ENCODE measurements at regions of chr13 and their contacts with region 1.

Region 1: DNA sequence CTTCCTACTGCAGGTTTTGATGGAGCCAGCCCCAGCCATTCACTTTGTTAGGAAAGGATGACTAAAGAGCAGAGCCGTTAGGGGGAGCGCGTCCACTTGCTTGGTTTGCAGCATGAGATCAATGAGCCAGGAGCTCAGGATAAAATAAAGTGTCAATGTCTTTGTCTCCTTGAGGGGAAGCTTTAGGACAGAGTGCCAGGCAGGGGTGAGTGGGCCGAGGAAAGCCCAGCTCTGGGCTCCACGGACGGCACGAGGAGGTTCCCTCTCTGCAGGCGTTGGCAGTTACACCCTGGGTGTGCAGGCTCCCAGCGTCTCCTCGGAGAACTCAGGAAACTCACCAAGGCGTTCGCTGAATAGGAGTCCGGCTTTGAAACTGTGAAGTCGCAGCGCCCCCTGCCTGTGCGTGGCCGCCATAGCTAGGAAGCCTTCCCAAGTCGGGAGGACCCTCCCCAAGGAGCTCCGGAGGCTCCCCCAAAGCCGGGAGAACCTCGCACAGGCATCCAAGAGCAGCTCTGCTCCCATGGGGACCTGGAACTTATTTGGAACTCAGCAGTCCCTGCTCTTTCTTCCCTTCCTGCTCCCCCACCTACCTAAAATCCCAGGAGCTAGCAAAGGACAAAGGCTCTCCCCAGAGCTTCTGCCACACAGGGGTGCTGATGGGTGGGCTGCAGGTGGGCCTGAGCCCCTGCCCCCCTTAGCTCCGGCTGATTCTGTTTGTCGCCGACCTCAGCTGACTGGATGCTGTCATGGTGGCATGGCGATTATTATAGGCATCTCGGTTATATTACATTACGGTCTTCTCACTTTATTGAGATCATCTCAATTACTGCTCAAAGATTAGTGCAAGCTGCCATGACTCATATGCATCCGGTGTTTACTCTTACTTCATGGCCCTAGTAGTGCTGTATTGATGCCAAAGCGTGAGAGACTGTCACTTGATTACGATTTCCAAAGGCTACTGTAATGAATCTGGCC is 34.4 kb downstream of the GSX1 start:
- DNase-seq: peak; percentile 88
- H3K4me3 ChIP-seq: peak overlapping the region in 1 of 3 experiments; percentile 30
- H3K27ac ChIP-seq: no peak overlapping the region
- H3K4me1 ChIP-seq: no peaks in the 10 kb centered on the region
- H3K27me3 ChIP-seq: peaks cover 28 to 44% of the 10 kb centered on the region in 2 experiments
- CTCF ChIP-seq: peak; percentile 85 to 93
- POLR2A ChIP-seq: no peak

Region 2: DNA sequence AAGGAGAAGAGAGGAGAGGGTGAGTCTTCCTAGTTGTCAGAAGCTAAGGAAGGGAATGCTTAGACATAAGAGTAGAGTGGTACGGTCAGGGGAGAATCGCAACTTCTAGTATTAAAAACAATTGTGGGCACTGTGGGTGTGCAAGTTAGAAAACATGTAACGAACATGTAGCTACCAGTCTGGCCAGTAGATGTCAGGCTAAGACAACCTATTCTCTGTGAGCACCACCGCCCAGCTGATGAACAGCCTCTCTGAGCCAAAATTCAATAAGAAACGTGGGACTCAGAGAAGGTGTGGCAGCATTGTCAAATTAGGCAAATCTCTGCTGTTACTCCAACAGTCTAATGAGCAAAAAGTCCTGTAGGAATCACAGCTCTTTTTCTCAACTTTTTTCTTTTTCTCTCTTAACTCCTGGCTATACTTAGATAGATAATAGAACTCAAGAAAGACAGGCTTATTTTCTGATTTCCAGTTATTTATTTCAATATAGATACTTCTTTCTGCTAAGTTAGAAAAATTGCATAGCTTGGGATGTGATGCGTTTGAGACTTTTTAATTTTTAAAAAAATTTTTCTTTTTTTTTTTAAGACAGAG is 841.3 kb before region 1 on chr13:
- CTCF ChIA-PET with region 1: interaction called, 13 read pairs
- POLR2A ChIA-PET with region 1: no interaction called
- dilution Hi-C with region 1: no loop called
- intact Hi-C with region 1: loop called (anchors 1 kb)
- DNase-seq: peak; percentile 77
- H3K4me3 ChIP-seq: no peak overlapping the region
- H3K27ac ChIP-seq: no peak overlapping the region
- H3K4me1 ChIP-seq: peaks cover 4% of the 10 kb centered on the region
- H3K27me3 ChIP-seq: peaks cover 2 to 4% of the 10 kb centered on the region in 2 experiments
- CTCF ChIP-seq: peak; percentile 63 to 74
- POLR2A ChIP-seq: no peak

Region 3: GRCh38 chr13:27424246-27425157 is 402.2 kb before region 1 on chr13 and contains the start of gene GTF3A:
- CTCF ChIA-PET with region 1: interaction called, 11 read pairs
- POLR2A ChIA-PET with region 1: no interaction called
- dilution Hi-C with region 1: no loop called
- intact Hi-C with region 1: no loop called
- DNase-seq: peak; percentile 91
- H3K4me3 ChIP-seq: peak within 1 kb of the TSS; percentile 23 to 66 (median 57)
- H3K27ac ChIP-seq: peak within 1 kb of the TSS; percentile 69
- H3K4me1 ChIP-seq: peaks cover 25% of the 10 kb centered on the region
- H3K27me3 ChIP-seq: no peaks in the 10 kb centered on the region
- CTCF ChIP-seq: no peak
- POLR2A ChIP-seq: peak; percentile 89
- total RNA-seq, gene GTF3A: 71.2 and 73.3 TPM in 2 replicates

Region 4: DNA sequence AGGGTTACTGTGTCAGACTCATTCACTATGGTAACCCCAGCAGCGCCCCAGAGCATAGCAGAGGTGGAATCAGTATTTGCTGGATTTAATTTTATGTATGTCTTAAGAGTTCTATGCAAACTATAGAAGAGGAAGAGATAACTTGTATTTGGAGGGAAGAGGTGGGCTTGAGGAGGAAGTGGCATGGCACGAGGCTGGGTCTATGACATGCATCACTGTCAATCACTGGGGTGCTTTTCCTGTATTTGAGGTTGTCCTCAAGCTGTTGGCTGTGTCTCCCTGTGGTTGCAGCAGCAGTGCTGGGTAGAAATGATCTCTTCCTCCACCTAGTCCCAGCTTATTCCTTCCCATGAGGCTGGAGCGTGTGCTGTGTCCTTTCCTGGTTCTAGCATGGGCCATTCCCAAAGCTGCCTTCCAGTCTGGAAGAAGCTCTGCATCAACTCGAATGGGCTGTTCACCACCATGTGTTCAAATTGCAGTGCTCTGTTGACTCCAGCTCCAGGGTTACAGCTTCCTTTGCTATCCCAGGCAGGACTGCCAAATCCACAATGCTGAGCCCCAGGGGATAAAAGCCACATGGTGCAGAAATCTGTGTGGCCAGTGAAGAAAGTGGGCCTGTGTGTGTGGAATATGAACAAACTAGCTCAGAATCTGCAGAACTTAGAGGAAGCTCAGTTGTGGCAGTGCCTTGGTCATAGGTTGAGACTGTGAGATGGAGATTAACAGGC is 303.2 kb before region 1 on chr13:
- CTCF ChIA-PET with region 1: interaction called, 484 read pairs
- POLR2A ChIA-PET with region 1: no interaction called
- dilution Hi-C with region 1: loop called (anchors 25 kb)
- intact Hi-C with region 1: no loop called
- DNase-seq: no peak
- H3K4me3 ChIP-seq: no peak overlapping the region
- H3K27ac ChIP-seq: no peak overlapping the region
- H3K4me1 ChIP-seq: peaks cover 7% of the 10 kb centered on the region
- H3K27me3 ChIP-seq: peaks cover 4 to 9% of the 10 kb centered on the region in 2 experiments
- CTCF ChIP-seq: no peak
- POLR2A ChIP-seq: no peak

Region 5: DNA sequence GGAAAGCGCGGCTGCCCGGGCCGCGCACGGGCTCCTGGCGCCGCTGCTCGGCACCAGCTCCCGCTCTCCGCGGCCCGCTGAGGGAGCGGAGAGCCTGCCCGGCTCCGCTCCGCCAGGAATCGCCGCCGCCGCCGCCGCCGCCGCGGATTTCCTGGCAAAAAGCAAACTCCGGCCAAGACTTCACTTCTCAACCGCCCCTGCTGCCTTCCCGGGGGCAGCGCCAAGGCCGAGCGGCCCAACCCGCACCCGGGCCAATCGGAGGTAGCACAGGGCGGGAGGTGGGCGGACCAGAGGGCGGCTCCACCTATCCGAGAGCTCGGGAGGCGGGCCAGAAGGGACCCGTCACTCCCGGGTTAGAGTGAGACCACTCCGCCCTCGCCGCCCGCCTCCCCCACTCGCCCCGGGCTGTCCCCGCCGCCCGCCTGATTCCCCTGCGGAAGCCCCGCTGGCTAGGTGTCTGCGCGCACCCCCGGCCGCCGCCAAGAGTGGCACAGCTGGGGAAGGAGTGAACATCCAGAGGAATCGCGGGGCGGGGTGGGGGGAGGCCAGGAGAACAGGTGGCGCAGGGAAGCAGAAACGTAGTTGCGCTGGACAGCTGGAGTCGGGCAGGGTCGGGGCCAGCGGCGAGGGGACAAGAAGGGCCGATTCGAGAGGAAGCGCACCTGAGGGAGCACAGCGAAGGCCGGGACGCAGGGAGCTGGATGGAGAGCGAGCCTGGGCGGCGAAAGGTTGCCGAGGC is 206.1 kb before region 1 on chr13 and contains the start of gene LNX2:
- CTCF ChIA-PET with region 1: interaction called, 21 read pairs
- POLR2A ChIA-PET with region 1: no interaction called
- dilution Hi-C with region 1: no loop called
- intact Hi-C with region 1: loop called (anchors 5 kb)
- DNase-seq: peak; percentile 97
- H3K4me3 ChIP-seq: peak within 1 kb of the TSS; percentile 65 to 90 (median 90)
- H3K27ac ChIP-seq: peak within 1 kb of the TSS; percentile 75
- H3K4me1 ChIP-seq: peaks cover 17% of the 10 kb centered on the region
- H3K27me3 ChIP-seq: no peaks in the 10 kb centered on the region
- CTCF ChIP-seq: no peak
- POLR2A ChIP-seq: peak; percentile 22
- total RNA-seq, gene LNX2: 9.1 and 9.9 TPM in 2 replicates

Region 6: DNA sequence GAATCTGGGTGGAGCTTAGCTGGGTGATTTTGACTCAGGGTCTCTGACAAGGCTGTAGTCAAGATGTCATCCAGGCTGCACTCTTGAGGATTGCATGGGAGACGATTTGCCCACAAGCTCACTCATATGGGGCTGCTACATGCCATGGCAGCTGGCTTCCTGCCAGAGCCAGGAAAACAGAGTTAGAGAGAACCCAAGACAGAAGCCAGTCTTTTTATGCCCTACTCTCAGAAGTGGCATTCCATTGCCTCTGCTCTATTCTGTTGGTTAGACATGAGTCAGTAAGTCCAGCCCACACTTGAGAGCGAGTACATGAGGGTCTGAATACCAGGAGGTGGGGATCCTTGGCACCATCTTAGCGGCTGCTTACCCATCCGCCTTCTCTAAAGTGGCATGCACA is 195.5 kb before region 1 on chr13:
- CTCF ChIA-PET with region 1: no interaction called
- POLR2A ChIA-PET with region 1: no interaction called
- dilution Hi-C with region 1: no loop called
- intact Hi-C with region 1: no loop called
- DNase-seq: no peak
- H3K4me3 ChIP-seq: no peak overlapping the region
- H3K27ac ChIP-seq: no peak overlapping the region
- H3K4me1 ChIP-seq: no peaks in the 10 kb centered on the region
- H3K27me3 ChIP-seq: no peaks in the 10 kb centered on the region
- CTCF ChIP-seq: no peak
- POLR2A ChIP-seq: no peak

Region 7: DNA sequence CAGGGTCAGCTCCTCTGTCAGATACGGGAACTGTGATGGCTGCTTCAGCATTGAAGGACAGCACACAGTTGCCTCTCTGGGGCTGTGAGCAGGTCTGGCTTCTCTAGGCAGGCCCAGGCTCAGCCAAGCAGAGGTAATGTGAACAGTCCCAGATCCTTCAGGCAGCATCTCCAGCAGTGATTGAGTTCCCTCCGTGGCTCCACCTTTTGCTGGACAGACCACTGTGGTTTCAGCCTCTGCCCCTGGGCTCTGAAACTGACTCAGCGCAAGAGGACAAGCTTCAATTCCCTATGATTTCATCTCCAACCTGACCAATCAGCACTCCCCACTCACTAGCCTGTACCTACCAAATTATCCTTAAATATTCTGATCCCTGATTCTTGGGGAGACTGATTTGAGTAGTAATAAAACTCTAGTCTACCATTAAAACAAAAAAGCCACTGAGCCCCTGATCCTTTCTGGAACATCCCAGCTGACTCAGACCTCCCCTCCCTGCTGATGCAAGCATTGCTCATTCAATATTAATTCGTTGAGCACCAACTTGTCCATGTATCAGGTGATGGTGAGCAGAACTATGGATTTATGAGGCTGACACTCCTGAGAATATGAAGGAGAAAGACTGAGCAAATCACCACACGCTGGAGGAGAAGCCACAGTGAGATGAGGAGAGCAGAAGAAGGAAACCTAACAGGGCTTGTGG is 17.7 kb before region 1 on chr13:
- CTCF ChIA-PET with region 1: interaction called, 17 read pairs
- POLR2A ChIA-PET with region 1: no interaction called
- dilution Hi-C with region 1: no loop called
- intact Hi-C with region 1: no loop called
- DNase-seq: no peak
- H3K4me3 ChIP-seq: no peak overlapping the region
- H3K27ac ChIP-seq: no peak overlapping the region
- H3K4me1 ChIP-seq: no peaks in the 10 kb centered on the region
- H3K27me3 ChIP-seq: peaks cover 4 to 11% of the 10 kb centered on the region in 2 experiments
- CTCF ChIP-seq: no peak
- POLR2A ChIP-seq: no peak

Region 8: GRCh38 chr13:27926644-27927434 is 100.2 kb after region 1 on chr13:
- CTCF ChIA-PET with region 1: no interaction called
- POLR2A ChIA-PET with region 1: no interaction called
- dilution Hi-C with region 1: no loop called
- intact Hi-C with region 1: no loop called
- DNase-seq: no peak
- H3K4me3 ChIP-seq: no peak overlapping the region
- H3K27ac ChIP-seq: no peak overlapping the region
- H3K4me1 ChIP-seq: no peaks in the 10 kb centered on the region
- H3K27me3 ChIP-seq: peaks cover 79 to 99% of the 10 kb centered on the region in 2 experiments
- CTCF ChIP-seq: no peak
- POLR2A ChIP-seq: no peak

Measured in endothelial cell of umbilical vein (primary cell).